Activated CD8-positive, alpha-beta T cell treated with anti-CD3 and anti-CD28 coated beads, Interleukin-2, amount 10 ng/mL, durations not matched to agents 7 days and 5 days (primary cell): ENCODE measurements at regions of chr3 and their contacts with region 1.

Region 1: GRCh38 chr3:129160891-129161859 is at the start of gene ISY1:
- DNase-seq: peak; percentile 93
- ATAC-seq: peak; percentile 84
- H3K4me3 Mint-ChIP-seq: peak within 1 kb of the TSS; percentile 91
- H3K27ac Mint-ChIP-seq: peak within 1 kb of the TSS; percentile 99
- H3K4me1 Mint-ChIP-seq: peaks cover 36% of the 10 kb centered on the region
- H3K27me3 Mint-ChIP-seq: no peaks in the 10 kb centered on the region
- total RNA-seq, gene ISY1: 57.9 to 65.7 TPM

Region 2: GRCh38 chr3:129176051-129176450 is 14.9 kb after region 1 on chr3:
- CTCF ChIA-PET with region 1: interaction called, 18 read pairs
- POLR2A ChIA-PET with region 1: interaction called, 3 read pairs
- DNase-seq: no peak
- ATAC-seq: no peak
- H3K4me3 Mint-ChIP-seq: no peak overlapping the region
- H3K27ac Mint-ChIP-seq: peak overlapping the region; percentile 23
- H3K4me1 Mint-ChIP-seq: peaks cover 72% of the 10 kb centered on the region
- H3K27me3 Mint-ChIP-seq: no peaks in the 10 kb centered on the region

Region 3: DNA sequence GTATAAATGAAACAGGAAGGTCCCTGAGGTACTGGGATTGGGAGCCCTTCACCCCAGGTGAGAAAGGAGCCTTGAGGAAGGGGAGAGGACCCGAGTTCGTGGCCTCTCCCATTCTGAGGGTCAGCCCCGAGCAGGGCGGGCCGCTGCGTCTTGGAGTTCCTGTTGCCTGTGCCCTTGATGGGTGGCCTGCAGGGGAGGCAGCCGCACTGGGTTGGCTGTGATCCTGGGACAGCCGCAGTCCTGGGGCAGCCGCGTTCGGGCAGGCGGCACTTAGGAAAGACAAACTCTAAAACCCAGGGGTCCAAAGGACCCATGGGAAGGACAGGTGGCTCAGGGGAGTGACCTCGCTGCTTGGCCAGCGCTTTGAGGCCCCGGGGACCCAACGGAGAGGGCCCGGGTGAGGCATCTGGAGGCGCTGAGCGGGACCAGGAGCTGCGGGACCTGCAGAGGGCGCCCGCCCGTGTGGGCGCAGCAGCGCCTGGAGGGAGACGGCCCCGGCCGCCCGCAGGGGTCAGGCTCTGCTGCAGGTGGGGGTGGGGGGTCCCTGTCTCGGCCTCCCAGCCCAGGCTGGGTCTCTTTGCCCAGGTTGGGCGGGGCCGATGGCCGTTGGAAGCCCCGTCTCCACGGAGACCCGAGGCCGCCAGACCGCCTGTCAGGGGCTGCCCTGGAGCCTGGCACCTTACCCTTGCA is 182.6 kb after region 1 on chr3:
- CTCF ChIA-PET with region 1: no interaction called
- POLR2A ChIA-PET with region 1: no interaction called
- DNase-seq: peak; percentile 36
- ATAC-seq: peak; percentile 83
- H3K4me3 Mint-ChIP-seq: no peak overlapping the region
- H3K27ac Mint-ChIP-seq: no peak overlapping the region
- H3K4me1 Mint-ChIP-seq: peaks cover 7% of the 10 kb centered on the region
- H3K27me3 Mint-ChIP-seq: peaks cover 22% of the 10 kb centered on the region